Activated CD4-positive, alpha-beta T cell treated with anti-CD3 and anti-CD28 coated beads for 36 hours (primary cell): ENCODE measurements at regions of chr1 and their contacts with region 1.

Region 1: GRCh38 chr1:203216274-203217138 is 13.0 kb downstream of the CHIT1 start:
- DNase-seq: peak; percentile 71
- ATAC-seq: peak; percentile 80
- H3K4me3 Mint-ChIP-seq: no peak overlapping the region
- H3K27ac Mint-ChIP-seq: no peak overlapping the region
- H3K4me1 Mint-ChIP-seq: no peaks in the 10 kb centered on the region
- H3K27me3 Mint-ChIP-seq: peaks cover 7% of the 10 kb centered on the region

Region 2: DNA sequence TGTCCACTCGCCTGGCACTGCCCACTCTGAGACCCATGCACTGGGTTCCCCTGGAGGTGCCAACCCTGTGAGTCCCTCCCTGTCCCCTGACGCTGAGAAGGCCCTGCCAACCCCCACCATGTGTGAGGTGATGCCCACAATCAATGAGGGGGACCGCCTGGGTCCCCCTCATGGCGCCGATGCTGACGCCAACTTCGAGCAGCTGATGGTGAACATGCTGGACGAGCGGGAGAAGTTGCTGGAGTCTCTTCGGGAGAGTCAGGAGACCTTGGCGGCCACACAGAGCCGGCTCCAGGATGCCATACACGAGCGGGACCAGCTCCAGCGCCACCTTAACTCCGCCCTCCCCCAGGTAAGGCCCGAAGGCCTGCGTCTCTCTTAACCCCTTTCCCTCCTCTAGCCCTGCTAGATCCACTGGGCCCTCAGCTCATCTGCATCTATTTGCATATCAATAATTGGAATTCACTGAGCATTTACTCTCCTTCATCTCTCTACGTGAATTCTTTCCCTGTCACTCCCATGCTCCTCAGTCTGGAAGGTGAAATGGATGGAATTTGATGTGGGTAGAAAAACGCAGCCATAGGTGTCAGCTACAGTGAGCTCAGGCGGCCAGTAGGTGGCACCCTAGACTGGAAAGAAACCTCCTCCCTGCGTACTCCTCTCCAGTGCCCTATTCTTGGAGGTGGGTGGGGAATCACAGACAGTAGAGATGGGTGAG is 177.5 kb before region 1 on chr1:
- CTCF ChIA-PET with region 1: interaction called, 67 read pairs
- POLR2A ChIA-PET with region 1: no interaction called
- intact Hi-C with region 1: loop called (anchors 1 kb)
- DNase-seq: peak; percentile 77
- ATAC-seq: peak; percentile 85
- H3K4me3 Mint-ChIP-seq: no peak overlapping the region
- H3K27ac Mint-ChIP-seq: no peak overlapping the region
- H3K4me1 Mint-ChIP-seq: peaks cover 4% of the 10 kb centered on the region
- H3K27me3 Mint-ChIP-seq: peaks cover 4% of the 10 kb centered on the region

Region 3: DNA sequence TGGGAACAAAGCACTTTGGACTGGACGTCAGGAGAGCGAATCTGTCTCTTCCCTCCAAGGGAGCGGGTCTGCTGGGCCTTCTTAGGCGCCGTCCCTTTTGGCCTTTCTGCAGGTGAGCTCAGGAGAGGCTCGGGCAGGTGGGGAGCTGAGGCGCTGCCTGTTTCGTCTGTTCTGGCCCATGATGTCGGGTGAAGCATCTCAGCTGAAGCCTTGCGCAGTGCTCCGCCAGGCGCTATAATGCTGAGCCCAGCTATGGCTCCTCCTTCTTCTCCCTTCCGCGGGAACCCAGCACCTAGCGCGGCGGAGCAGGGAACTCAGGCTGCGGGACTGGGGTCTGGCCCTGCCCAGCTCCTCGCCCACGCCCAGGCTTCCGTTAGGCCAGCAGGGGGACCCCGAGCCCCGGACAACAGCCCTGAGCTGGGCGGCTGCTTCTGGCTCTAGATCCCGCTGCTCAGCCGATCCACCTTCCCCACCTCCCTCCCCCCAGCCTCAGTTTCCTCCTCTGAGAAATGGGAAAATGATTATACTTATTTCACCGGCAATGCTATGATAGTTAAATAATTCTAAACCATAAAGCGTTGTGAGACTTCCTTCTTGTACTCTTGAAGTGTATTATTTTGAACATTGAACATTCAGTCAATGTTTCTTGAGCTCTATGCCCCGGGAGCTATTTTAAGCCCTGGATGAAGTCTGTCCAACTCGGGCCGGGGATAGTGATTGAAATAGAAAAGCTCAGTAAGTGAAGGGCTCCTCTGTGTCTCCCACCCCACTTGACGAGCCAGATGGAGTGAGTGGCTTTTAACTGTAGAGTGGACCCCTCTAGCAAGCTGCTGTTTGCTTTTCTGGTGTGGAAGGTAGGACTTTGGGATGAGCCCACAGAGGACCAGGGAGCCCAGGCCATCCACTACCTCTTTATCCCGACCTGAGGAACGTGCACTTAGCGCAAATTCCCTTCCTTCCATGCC is 98.6 kb before region 1 on chr1:
- CTCF ChIA-PET with region 1: interaction called, 23 read pairs
- POLR2A ChIA-PET with region 1: no interaction called
- intact Hi-C with region 1: loop called in 1 of 2 experiments (anchors 1 kb)
- DNase-seq: peak; percentile 73
- ATAC-seq: peak; percentile 65
- H3K4me3 Mint-ChIP-seq: no peak overlapping the region
- H3K27ac Mint-ChIP-seq: no peak overlapping the region
- H3K4me1 Mint-ChIP-seq: peaks cover 2% of the 10 kb centered on the region
- H3K27me3 Mint-ChIP-seq: peaks cover 38% of the 10 kb centered on the region

Region 4: DNA sequence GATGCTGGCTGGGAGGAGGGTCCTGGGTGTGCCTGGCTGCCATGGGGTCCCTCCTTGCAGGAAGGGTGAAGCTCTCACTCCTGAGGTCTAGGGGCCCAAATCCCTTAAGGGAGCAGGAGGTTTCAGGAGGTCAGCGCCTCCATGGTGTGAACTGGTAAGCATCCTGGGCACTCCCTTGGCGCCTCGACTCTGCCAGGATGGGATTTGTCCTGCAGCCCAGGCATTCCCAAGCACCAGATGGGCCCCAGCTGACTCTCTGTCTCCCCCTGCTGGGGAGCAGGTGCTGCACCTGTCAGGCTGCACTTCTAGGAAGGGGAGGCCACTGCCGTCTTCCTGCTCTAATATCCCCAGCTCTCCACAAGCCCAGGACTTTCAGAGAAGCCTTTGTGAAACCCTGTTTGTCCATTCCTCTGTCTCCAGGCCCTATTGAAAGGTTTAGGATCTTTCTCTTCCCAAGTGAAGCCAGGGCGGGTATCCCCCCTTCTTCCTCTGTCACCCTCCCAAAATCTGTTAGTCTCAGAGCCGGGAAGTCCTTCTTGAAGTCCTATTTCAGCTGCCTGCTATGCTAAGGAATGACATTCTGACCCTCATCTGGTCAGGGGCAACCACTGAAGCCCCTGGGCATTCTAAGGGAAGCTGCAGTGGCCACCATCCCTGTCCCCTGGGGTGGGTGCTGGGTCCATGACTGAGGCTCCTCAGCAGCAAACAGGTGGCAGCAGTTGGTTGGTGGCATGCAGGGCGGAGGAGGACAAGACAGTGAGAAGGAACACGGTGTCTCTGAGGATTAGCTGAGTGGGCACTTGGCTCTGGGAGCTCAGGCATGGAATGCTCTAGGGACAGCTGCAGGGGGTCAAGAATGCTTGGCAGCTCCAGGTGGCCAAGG is 44.1 kb before region 1 on chr1:
- CTCF ChIA-PET with region 1: interaction called, 19 read pairs
- POLR2A ChIA-PET with region 1: no interaction called
- intact Hi-C with region 1: loop called in 1 of 2 experiments (anchors 2 kb)
- DNase-seq: peak; percentile 75
- ATAC-seq: peak; percentile 75
- H3K4me3 Mint-ChIP-seq: no peak overlapping the region
- H3K27ac Mint-ChIP-seq: no peak overlapping the region
- H3K4me1 Mint-ChIP-seq: no peaks in the 10 kb centered on the region
- H3K27me3 Mint-ChIP-seq: no peaks in the 10 kb centered on the region

Region 5: DNA sequence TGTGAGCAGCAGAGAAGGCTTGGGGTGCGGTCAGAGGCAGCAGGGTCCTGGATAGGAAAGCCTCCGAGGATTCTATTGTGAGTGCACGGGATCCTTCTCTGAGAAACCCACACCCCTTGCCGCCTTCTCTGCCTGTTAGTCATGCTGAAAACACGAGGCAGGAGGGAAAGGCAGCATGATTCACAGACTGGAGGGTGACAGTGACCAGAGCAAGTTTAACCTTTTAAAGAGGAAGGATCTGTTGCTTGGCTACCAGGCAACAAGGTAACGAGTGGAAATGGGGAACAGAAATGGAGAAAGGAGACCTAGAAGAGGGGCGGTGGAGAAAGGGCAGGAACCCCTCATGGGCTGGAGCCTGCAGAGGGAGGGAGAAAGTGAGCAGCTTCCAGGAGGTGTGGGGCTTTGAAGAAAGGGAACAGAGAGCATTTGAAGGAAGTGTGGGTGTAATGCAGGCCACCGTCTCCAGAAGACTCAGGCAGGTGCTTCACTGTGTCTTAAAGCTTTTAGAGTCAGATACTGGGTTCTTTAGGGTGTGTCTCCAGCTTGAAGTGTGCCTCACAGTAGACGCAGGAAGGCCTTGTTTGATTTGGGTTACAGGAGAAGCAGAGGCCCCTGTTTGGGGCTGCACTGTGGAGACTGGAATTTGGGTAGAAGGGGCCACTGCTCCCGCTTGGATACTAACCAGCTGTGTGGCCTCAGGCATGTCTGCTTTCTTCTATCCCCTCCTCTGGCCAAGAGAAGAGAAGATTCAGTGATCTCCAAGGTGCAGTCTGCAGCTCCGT is 296.5 kb after region 1 on chr1:
- CTCF ChIA-PET with region 1: no interaction called
- POLR2A ChIA-PET with region 1: no interaction called
- intact Hi-C with region 1: no loop called
- DNase-seq: peak; percentile 81
- ATAC-seq: peak; percentile 88
- H3K4me3 Mint-ChIP-seq: peak overlapping the region; percentile 6
- H3K27ac Mint-ChIP-seq: peak overlapping the region; percentile 83
- H3K4me1 Mint-ChIP-seq: peaks cover 36% of the 10 kb centered on the region
- H3K27me3 Mint-ChIP-seq: no peaks in the 10 kb centered on the region